Common myeloid progenitor, CD34-positive (primary cell): ENCODE measurements at regions of chr1 and their contacts with region 1.

Region 1: GRCh38 chr1:2044510-2045319 is 5.5 kb upstream of the PRKCZ start:
- DNase-seq: peak; percentile 53 to 78 (median 76)
- H3K4me3 ChIP-seq: peak overlapping the region in 3 of 7 experiments; percentile 31 to 47 (median 40)
- H3K27ac ChIP-seq: no peak overlapping the region
- H3K4me1 ChIP-seq: peaks cover 0 to 25% (median 15%) of the 10 kb centered on the region in 4 experiments
- H3K27me3 ChIP-seq: peaks cover 0 to 33% (median 26%) of the 10 kb centered on the region in 5 experiments

Region 2: DNA sequence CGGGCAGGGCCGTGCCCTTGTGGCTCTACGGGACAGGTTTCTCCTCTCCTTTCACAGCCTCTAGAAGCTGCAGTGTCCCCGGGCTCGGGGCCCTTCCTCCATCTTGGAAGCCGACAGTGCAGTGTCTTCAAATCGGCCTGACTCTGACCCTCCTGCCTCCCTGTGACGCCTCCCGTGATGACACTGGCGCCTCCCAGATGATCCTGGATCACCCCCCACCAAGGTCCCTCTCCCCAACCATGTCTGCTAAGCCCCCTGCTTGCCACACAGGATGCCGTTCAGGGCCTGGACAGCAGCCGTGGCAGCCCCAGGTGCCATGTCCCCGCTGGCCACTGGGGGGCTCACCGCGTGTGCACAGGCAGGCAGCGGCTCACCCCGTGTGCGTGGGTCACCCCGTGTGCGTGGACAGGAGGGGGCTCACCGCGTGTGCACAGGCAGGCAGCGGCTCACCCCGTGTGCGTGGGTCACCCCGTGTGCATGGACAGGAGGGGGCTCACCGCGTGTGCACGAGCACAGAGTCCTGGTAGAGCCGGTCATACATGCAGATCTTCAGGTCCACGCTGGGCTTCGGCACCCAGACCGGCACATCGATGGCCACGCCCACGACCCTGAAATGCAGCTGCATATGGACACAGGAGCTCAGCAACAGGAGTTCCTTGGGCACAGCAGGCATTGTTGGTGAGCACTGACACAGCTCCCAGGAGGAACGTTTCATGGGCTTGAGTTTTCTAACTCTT is 100.7 kb before region 1 on chr1:
- CTCF ChIA-PET with region 1: interaction called, 64 read pairs
- POLR2A ChIA-PET with region 1: no interaction called
- DNase-seq: peak; percentile 29 to 73 (median 66)
- H3K4me3 ChIP-seq: peak overlapping the region in 3 of 7 experiments; percentile 10 to 59 (median 49)
- H3K27ac ChIP-seq: no peak overlapping the region
- H3K4me1 ChIP-seq: peaks cover 0 to 5% (median 4%) of the 10 kb centered on the region in 4 experiments
- H3K27me3 ChIP-seq: peaks cover 0 to 10% (median 2%) of the 10 kb centered on the region in 5 experiments

Region 3: DNA sequence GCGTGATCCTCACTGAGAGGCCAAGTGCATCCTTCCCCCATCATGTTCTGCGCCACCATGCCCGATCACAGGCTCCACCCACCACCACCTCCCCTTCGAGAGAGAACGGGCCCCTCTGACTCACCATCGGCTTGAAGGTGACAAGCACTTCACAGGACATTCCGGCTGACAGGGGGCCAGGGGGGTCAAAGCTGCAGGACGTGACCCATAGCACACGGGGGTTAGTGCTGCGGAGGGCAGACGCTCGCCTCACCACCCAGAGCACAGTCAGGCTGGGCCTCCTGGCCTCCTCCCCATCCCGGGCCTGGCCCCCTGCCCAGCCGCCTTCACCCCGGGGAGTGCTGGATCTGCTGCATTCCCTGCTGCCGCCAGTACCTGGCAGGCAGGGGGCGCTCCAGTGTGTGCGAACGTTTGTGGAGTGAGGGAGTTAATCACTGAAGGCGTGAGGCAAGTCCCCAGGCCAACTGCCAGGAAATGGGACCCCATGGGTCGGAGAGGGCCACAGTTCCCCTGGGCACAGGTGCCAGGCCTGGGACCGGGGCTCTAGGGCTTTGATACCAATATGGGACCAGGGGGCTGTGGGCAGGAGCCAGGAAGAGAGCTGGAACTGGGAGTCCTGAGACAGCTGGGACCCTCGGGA is 84.8 kb before region 1 on chr1:
- CTCF ChIA-PET with region 1: interaction called, 144 read pairs
- POLR2A ChIA-PET with region 1: no interaction called
- DNase-seq: peak; percentile 76 to 87 (median 86)
- H3K4me3 ChIP-seq: peak overlapping the region in 2 of 7 experiments; percentile 36 to 48
- H3K27ac ChIP-seq: no peak overlapping the region
- H3K4me1 ChIP-seq: peaks cover 0 to 10% (median 6%) of the 10 kb centered on the region in 4 experiments
- H3K27me3 ChIP-seq: peaks cover 0 to 20% (median 8%) of the 10 kb centered on the region in 5 experiments

Region 4: GRCh38 chr1:1966071-1966740 is 78.5 kb before region 1 on chr1:
- CTCF ChIA-PET with region 1: interaction called, 144 read pairs
- POLR2A ChIA-PET with region 1: no interaction called
- DNase-seq: no peak
- H3K4me3 ChIP-seq: no peak overlapping the region
- H3K27ac ChIP-seq: no peak overlapping the region
- H3K4me1 ChIP-seq: no peaks in the 10 kb centered on the region
- H3K27me3 ChIP-seq: peaks cover 0 to 20% (median 0%) of the 10 kb centered on the region in 5 experiments

Region 5: GRCh38 chr1:1989102-1989542 is 55.6 kb before region 1 on chr1:
- CTCF ChIA-PET with region 1: interaction called, 15 read pairs
- POLR2A ChIA-PET with region 1: no interaction called
- DNase-seq: no peak
- H3K4me3 ChIP-seq: no peak overlapping the region
- H3K27ac ChIP-seq: no peak overlapping the region
- H3K4me1 ChIP-seq: no peaks in the 10 kb centered on the region
- H3K27me3 ChIP-seq: peaks cover 0 to 14% (median 0%) of the 10 kb centered on the region in 5 experiments

Region 6: GRCh38 chr1:2021163-2021946 is 23.4 kb before region 1 on chr1:
- CTCF ChIA-PET with region 1: interaction called, 10 read pairs
- POLR2A ChIA-PET with region 1: no interaction called
- DNase-seq: no peak
- H3K4me3 ChIP-seq: no peak overlapping the region
- H3K27ac ChIP-seq: no peak overlapping the region
- H3K4me1 ChIP-seq: peaks cover 0 to 27% (median 18%) of the 10 kb centered on the region in 4 experiments
- H3K27me3 ChIP-seq: peaks cover 4 to 63% (median 28%) of the 10 kb centered on the region in 5 experiments

Region 7: GRCh38 chr1:2180297-2181245 is 135.9 kb after region 1 on chr1:
- CTCF ChIA-PET with region 1: no interaction called
- POLR2A ChIA-PET with region 1: no interaction called
- DNase-seq: no peak
- H3K4me3 ChIP-seq: no peak overlapping the region
- H3K27ac ChIP-seq: peak overlapping the region in 1 of 2 experiments; percentile 54
- H3K4me1 ChIP-seq: peaks cover 0 to 3% (median 0%) of the 10 kb centered on the region in 4 experiments
- H3K27me3 ChIP-seq: no peaks in the 10 kb centered on the region